ENCODE measurements at regions of chr3 and their contacts with region 1.

Region 1: DNA sequence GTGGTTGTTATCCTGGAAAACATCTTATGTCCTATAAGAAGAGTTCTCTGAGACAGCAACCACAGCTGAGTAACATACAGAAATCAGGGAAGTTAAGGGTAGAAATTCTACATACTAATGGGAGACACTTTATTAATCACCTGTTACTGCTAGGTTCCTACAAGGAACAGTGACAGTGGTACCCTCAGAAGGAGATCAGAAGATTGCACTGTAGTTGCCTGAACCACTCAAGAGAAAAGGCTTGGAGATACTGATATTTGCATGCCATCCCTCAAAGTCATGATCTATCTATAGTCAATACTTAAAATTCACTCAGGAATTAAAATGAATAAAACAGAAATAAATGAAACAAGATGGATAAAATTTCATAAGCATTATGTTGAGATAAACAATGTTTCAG is 136.0 kb downstream of the LMLN start:
- DNase-seq: no peak
- H3K4me3 ChIP-seq: no peak overlapping the region
- H3K27ac ChIP-seq: no peak overlapping the region
- H3K4me1 ChIP-seq: no peaks in the 10 kb centered on the region
- H3K27me3 ChIP-seq: no peaks in the 10 kb centered on the region
- CTCF ChIP-seq: no peak

Region 2: GRCh38 chr3:197874653-197875052 is 221.4 kb before region 1 on chr3:
- CTCF ChIA-PET with region 1: no interaction called
- POLR2A ChIA-PET with region 1: interaction called, 11 read pairs
- intact Hi-C with region 1: no loop called
- DNase-seq: peak in 1 of 2 experiments; percentile 16
- H3K4me3 ChIP-seq: no peak overlapping the region
- H3K27ac ChIP-seq: no peak overlapping the region
- H3K4me1 ChIP-seq: no peaks in the 10 kb centered on the region
- H3K27me3 ChIP-seq: no peaks in the 10 kb centered on the region
- CTCF ChIP-seq: no peak